Endothelial cell of umbilical vein (primary cell): ENCODE measurements at regions of chr6 and their contacts with region 1.

Region 1: DNA sequence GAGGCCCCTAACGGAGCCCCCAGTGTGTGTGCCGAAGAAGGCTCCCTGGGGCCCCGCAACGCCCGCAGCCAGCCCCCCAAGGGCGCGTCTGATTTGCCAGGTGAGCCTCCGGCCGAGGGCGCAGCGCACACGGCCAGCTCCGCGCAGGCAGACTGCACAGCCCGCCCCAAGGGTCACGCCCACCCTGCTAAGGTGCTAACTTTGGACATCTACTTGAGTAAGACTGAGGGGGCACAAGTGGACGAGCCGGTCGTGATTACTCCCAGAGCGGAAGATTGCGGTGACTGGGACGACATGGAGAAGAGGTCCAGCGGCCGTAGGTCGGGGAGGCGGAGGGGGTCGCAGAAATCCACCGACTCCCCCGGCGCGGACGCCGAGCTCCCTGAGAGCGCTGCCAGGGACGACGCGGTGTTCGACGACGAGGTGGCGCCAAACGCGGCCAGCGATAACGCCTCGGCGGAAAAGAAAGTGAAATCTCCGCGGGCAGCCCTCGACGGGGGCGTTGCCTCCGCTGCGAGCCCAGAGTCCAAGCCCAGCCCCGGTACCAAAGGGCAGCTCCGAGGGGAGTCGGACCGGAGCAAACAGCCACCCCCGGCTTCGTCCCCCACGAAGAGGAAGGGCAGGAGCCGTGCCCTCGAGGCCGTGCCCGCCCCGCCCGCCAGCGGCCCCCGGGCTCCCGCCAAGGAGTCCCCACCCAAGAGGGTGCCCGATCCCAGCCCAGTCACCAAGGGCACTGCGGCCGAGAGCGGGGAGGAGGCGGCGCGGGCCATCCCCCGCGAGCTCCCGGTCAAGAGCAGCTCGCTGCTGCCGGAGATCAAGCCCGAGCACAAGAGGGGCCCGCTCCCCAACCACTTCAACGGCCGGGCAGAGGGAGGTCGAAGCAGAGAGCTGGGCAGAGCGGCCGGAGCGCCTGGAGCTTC is 117.0 kb downstream of the RTN4IP1 start:
- DNase-seq: peak; percentile 71
- H3K4me3 ChIP-seq: peak overlapping the region; percentile 70 to 79 (median 78)
- H3K27ac ChIP-seq: peak overlapping the region; percentile 39
- H3K4me1 ChIP-seq: peaks cover 33% of the 10 kb centered on the region
- H3K27me3 ChIP-seq: peaks cover 24 to 39% of the 10 kb centered on the region in 2 experiments
- CTCF ChIP-seq: peak in 1 of 2 donors; percentile 52
- POLR2A ChIP-seq: no peak

Region 2: DNA sequence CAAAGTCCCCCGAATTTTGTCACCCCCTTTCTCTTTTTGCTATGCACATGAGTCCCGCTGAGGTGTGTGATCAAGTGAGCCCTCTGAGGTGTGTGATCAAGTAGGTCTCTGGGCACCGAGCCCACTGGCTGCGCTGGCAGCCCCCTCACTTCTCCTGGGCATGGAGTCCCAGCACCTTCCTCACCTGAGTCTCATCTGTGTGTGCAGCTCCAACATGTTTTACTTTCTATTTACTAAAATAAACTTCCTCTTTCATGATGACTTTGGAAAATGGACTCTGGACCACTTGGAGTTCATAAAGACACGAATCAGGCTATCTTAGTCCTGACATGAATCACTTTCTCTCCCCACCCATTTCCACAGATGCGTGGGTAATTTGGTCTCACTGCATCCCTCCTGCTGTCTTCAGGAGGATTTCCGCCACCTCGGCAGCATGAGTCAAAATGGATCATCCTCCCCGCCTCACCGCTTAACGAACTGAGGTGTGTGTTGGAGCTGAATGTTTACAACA is 386.3 kb before region 1 on chr6:
- CTCF ChIA-PET with region 1: no interaction called
- POLR2A ChIA-PET with region 1: no interaction called
- dilution Hi-C with region 1: no loop called
- intact Hi-C with region 1: no loop called
- DNase-seq: no peak
- H3K4me3 ChIP-seq: no peak overlapping the region
- H3K27ac ChIP-seq: no peak overlapping the region
- H3K4me1 ChIP-seq: no peaks in the 10 kb centered on the region
- H3K27me3 ChIP-seq: no peaks in the 10 kb centered on the region
- CTCF ChIP-seq: no peak
- POLR2A ChIP-seq: no peak

Region 3: DNA sequence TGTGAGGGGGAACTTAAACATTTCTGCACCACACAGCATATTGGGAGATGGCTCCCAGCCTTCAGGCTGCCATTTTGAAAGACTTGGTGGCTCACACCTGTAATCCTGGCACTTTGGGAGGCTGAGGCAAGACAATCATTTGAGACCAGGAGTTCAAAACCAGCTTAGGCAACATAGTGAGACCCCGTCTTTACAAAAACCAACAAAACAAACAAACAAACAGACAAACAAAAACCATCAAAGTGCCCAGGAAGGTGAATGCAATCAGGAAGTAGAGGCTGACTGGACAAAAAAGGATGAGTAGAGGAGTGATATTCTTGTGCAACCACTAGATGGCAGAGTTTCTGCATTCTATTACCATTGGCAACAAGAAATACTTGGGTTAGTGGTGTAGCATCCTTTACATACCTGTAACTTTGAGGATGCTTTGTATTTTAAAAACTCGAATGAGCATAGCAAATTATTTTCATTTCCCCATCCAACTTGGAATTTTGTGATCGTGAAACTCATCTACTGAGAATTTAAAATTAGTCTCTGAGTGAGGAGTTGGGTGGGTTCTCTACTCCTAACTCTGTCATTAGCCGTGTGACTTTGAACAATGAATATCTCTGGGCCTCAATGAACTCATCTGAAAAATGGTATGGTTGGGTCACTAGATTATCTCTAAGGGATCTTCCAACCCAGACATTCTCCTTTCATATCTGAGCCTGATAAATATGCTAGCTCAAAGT is 67.4 kb before region 1 on chr6:
- CTCF ChIA-PET with region 1: interaction called, 12 read pairs
- POLR2A ChIA-PET with region 1: no interaction called
- dilution Hi-C with region 1: no loop called
- intact Hi-C with region 1: loop called (anchors 1 kb)
- DNase-seq: peak; percentile 52
- H3K4me3 ChIP-seq: no peak overlapping the region
- H3K27ac ChIP-seq: no peak overlapping the region
- H3K4me1 ChIP-seq: no peaks in the 10 kb centered on the region
- H3K27me3 ChIP-seq: peaks cover 14 to 29% of the 10 kb centered on the region in 2 experiments
- CTCF ChIP-seq: peak; percentile 61 to 68
- POLR2A ChIP-seq: no peak

Region 4: DNA sequence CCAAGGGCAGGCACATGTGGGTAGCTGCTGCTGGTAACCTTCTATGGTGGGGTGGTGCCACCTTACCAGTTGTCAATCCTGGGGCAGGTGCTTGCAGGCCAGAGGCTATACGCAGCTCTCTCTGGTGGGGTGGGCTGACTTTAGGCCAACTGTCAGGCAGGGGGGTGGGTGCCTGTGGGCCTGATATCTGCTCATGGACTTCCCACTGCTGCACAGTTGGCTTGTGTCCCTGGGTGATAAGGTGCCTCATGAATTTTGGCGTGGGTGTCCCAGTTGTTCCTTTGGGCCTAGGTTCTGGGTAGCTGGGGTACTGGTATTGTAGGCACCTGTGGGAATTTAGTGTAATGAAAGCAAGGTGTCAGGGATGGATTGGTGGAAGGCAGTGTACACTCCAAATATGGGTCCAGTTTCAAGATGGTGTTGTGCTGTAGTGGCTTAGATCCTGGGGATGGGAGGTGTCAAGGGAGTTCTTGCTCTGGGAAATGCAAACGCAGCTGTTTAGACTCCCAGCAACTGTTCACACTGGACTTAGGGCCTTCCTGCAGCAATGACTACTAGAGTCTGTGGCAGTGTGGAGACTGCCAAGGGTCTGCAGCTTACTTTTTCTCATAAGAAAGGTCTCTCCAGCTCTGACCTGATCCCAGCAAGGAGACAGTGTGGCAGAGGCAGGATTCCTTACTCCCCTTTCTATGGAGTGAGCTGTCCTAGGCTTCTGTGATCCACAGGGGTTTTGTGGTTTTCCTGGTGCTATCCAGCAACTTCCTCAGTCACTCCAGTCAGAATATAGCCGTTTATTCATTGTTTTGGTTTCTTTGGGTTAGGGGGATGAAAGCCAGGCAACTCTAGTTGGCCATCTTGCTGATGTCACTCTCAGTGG is 23.6 kb before region 1 on chr6:
- CTCF ChIA-PET with region 1: no interaction called
- POLR2A ChIA-PET with region 1: no interaction called
- dilution Hi-C with region 1: no loop called
- intact Hi-C with region 1: no loop called
- DNase-seq: no peak
- H3K4me3 ChIP-seq: no peak overlapping the region
- H3K27ac ChIP-seq: no peak overlapping the region
- H3K4me1 ChIP-seq: no peaks in the 10 kb centered on the region
- H3K27me3 ChIP-seq: peaks cover 2 to 10% of the 10 kb centered on the region in 2 experiments
- CTCF ChIP-seq: no peak
- POLR2A ChIP-seq: no peak

Region 5: DNA sequence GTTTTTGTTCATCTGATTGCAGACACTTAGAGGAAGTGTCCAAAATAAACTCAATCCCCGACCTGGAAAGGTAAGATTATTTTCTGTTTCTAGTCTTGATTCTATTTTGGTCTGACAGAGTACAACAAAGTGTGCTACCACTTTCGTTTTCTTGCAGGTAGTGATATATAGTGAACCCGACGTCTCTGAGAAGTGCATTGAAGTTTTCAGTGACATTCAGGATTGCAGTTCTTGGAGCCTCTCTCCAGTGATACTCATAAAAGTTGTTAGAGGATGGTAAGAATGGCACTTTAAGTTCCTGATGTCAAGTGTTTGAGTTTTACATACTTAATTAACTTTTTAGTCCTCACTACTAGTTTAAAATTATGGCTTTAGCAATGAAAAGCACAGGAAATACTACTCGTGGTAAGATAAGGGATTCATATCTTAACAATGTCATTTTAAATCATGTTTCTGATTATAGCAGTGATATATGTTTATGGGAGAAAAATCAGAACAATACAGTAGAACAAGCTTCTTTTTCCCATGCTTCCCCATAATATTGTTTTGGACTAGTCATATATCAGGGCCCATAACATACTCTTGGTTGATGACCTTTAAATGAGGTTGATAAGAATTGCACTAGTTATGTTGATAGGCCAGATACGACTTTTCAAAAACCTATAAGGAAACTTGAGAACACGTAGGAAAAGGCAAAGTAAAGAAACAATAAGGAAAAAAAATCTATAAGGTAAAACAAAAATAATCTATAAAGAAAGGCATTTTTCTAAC is 13.0 kb after region 1 on chr6:
- CTCF ChIA-PET with region 1: interaction called, 33 read pairs
- POLR2A ChIA-PET with region 1: no interaction called
- dilution Hi-C with region 1: no loop called
- intact Hi-C with region 1: loop called (anchors 1 kb)
- DNase-seq: peak; percentile 70
- H3K4me3 ChIP-seq: peak overlapping the region in 2 of 3 experiments; percentile 10 to 41
- H3K27ac ChIP-seq: peak overlapping the region; percentile 31
- H3K4me1 ChIP-seq: peaks cover 43% of the 10 kb centered on the region
- H3K27me3 ChIP-seq: no peaks in the 10 kb centered on the region
- CTCF ChIP-seq: no peak
- POLR2A ChIP-seq: no peak

Region 6: GRCh38 chr6:106546691-106547414 is 34.5 kb after region 1 on chr6:
- CTCF ChIA-PET with region 1: interaction called, 27 read pairs
- POLR2A ChIA-PET with region 1: no interaction called
- dilution Hi-C with region 1: no loop called
- intact Hi-C with region 1: loop called (anchors 1 kb)
- DNase-seq: peak; percentile 94
- H3K4me3 ChIP-seq: peak overlapping the region in 1 of 3 experiments; percentile 10
- H3K27ac ChIP-seq: peak overlapping the region; percentile 99
- H3K4me1 ChIP-seq: peaks cover 29% of the 10 kb centered on the region
- H3K27me3 ChIP-seq: no peaks in the 10 kb centered on the region
- CTCF ChIP-seq: no peak
- POLR2A ChIP-seq: peak; percentile 30

Region 7: GRCh38 chr6:106563614-106564013 is 51.3 kb after region 1 on chr6:
- CTCF ChIA-PET with region 1: interaction called, 62 read pairs
- POLR2A ChIA-PET with region 1: no interaction called
- dilution Hi-C with region 1: no loop called
- intact Hi-C with region 1: loop called (anchors 1 kb)
- DNase-seq: no peak
- H3K4me3 ChIP-seq: no peak overlapping the region
- H3K27ac ChIP-seq: no peak overlapping the region
- H3K4me1 ChIP-seq: no peaks in the 10 kb centered on the region
- H3K27me3 ChIP-seq: no peaks in the 10 kb centered on the region
- CTCF ChIP-seq: no peak
- POLR2A ChIP-seq: no peak